ENCODE measurements at regions of chrX and their contacts with region 1.

Region 1: DNA sequence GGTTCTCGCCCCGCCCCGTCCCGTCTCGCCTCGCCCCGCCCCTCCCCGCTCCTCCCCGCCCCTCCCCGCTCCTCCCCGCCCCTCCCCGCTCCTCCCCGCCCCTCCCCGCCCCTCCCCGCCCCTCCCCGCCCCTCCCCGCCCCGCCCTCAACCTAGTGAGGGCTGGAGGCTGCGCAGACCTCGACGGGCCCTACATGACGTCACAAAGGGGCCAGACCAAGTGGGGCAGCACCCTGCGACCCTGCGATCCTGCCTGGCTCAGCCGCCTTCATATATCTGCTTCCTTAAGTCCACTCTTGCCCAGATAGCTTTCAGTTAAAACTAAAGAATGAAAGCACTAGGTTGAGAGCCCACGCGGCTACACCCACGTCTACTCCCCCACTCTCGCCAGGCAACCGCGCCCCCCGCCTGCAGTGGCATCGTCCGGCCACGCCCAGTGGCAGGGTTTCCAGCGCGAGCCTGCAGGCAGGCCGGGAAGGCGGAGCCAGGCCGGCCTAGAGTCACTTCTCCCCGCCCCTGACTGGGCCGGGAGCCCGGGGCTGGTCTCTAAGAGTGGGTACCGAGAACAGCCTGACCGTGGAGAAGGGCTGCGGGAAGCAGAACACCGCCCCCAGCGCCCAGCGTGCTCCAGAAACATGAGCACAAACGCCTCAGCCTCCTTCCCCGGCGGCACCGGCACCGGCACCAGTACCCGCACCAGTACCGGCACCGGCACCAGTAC is 1.5 kb upstream of the MAOA start:
- DNase-seq: peak; percentile 93
- H3K4me3 ChIP-seq: peak overlapping the region; percentile 52 to 83 (median 64)
- H3K27ac ChIP-seq: peak overlapping the region; percentile 91 to 93 (median 93)
- H3K4me1 ChIP-seq: peaks cover 0 to 4% (median 0%) of the 10 kb centered on the region in 4 donors
- H3K27me3 ChIP-seq: no peaks in the 10 kb centered on the region
- CTCF ChIP-seq: peak; percentile 20 to 49 (median 24)
- EP300 ChIP-seq: no peak
- POLR2A ChIP-seq: peak; percentile 79

Region 2: DNA sequence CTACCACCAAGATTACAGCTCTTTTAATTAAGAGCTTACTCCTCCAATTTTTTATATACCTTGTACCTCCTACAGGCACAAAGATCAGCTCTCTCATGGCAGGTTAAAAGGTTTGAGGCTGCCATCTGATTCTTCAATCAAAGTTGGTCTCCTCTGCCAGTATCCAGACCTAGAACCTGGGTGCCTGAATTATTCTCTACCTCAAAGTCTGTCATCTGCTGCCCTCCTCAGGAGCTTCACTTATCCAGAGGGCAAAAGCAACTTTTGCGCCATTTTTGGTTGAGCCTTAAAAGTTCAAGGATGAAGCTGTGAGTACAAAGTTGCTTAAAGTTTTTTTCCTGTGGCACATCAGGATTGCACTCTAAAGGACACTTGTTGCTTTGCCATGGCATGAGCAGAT is 533.0 kb before region 1 on chrX:
- in situ Hi-C with region 1: no loop called
- intact Hi-C with region 1: no loop called
- DNase-seq: no peak
- H3K4me3 ChIP-seq: no peak overlapping the region
- H3K27ac ChIP-seq: no peak overlapping the region
- H3K4me1 ChIP-seq: no peaks in the 10 kb centered on the region
- H3K27me3 ChIP-seq: no peaks in the 10 kb centered on the region
- CTCF ChIP-seq: no peak
- EP300 ChIP-seq: no peak
- POLR2A ChIP-seq: no peak

Region 3: GRCh38 chrX:43693602-43694406 is 39.2 kb after region 1 on chrX:
- in situ Hi-C with region 1: no loop called
- intact Hi-C with region 1: loop called (anchors 5 kb)
- DNase-seq: no peak
- H3K4me3 ChIP-seq: no peak overlapping the region
- H3K27ac ChIP-seq: peak overlapping the region; percentile 32 to 64 (median 56)
- H3K4me1 ChIP-seq: peaks cover 0 to 22% (median 9%) of the 10 kb centered on the region in 4 donors
- H3K27me3 ChIP-seq: no peaks in the 10 kb centered on the region
- CTCF ChIP-seq: no peak
- EP300 ChIP-seq: no peak
- POLR2A ChIP-seq: no peak

Region 4: GRCh38 chrX:43750248-43750676 is 95.7 kb after region 1 on chrX:
- in situ Hi-C with region 1: no loop called
- intact Hi-C with region 1: loop called (anchors 5 kb)
- DNase-seq: peak; percentile 61
- H3K4me3 ChIP-seq: no peak overlapping the region
- H3K27ac ChIP-seq: peak overlapping the region in 3 of 4 donors; percentile 18 to 31 (median 20)
- H3K4me1 ChIP-seq: peaks cover 0 to 27% (median 8%) of the 10 kb centered on the region in 4 donors
- H3K27me3 ChIP-seq: no peaks in the 10 kb centered on the region
- CTCF ChIP-seq: peak; percentile 39 to 68 (median 49)
- EP300 ChIP-seq: no peak
- POLR2A ChIP-seq: no peak